ENCODE measurements at regions of chr13 and their contacts with region 1.

Region 1: GRCh38 chr13:52428295-52428694 is 22.1 kb downstream of the VPS36 start:
- DNase-seq: no peak
- H3K4me3 ChIP-seq: no peak overlapping the region
- H3K27me3 ChIP-seq: no peaks in the 10 kb centered on the region
- CTCF ChIP-seq: no peak

Region 2: DNA sequence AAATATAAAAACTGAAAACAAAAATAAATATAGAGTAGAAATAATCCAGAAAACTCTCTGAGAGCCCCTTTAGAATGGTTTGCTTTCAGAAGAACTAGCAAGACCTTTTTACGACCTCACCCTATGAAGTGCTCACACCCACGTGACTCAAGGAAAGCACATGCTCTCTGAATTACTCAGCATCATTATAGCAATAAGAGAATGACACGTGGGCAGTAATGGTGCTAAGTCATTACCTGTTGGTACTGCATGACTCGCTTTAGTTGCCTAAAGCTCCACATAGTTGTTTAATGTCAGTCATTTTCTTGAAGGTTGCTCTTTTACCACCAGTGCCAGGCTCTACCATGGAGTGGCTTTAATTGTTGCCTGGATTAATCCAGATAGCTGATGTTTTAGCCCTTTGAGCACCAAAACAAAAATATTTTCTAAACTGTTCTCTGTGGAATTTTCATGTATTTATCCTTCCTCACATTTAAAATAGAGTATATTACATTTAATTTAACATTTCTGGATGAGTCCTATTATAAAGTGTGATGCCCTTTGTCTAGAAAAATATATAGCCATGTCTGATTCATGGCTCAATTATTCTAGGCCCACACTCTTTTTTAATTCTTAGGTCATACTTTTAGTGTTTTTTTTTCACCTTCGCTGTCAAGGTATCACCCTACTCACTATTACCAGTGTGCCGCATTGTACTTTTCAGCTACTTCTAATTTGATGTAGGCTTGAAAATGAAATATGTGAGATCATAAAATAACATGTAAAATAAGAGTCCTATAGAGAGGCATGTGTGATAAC is 79.1 kb before region 1 on chr13:
- CTCF ChIA-PET with region 1: no interaction called
- POLR2A ChIA-PET with region 1: interaction called, 13 read pairs
- DNase-seq: peak; percentile 55
- H3K4me3 ChIP-seq: no peak overlapping the region
- H3K27me3 ChIP-seq: no peaks in the 10 kb centered on the region
- CTCF ChIP-seq: no peak

Region 3: DNA sequence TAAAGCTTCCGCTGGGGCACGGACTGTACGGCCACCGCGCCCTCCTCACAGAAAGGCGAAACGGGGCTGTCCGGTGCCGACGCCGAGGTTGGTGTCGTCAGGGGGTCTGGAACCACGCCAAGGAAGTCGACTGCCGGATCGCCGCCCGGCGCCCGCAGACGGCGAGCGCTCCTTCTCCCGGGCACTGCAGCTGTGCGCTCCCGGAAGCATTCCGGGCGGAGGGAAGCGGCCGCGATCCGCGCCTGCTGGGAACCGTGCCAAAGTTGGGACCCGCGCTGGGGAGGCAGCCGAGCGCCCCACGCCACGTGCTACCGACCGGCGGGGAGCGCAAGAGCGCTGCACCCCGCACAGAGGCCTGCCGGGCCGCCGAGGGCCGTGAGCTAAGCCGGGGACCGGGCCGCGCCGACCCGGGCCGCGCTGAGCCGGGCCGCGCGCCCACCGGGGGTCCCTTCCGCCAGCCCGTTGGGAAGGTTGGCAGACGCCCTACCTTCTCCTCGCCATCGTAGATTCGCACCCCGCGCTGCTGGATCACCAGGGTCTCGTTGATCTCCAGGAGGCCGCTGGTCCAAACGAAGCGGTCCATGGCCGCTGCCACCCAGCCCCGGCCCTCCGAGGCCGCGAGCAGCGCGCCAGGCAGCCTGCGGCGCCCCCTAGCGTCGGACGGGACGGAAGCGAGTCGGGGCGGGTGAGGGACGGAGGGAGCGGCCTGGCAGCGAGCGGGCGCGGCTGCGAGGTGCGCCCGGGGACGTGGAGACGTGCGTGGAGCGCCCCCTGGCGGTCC is 21.9 kb after region 1 on chr13 and contains the start of gene VPS36:
- CTCF ChIA-PET with region 1: interaction called, 15 read pairs
- POLR2A ChIA-PET with region 1: no interaction called
- DNase-seq: peak; percentile 46
- H3K4me3 ChIP-seq: peak within 1 kb of the TSS; percentile 67
- H3K27me3 ChIP-seq: no peaks in the 10 kb centered on the region
- CTCF ChIP-seq: peak; percentile 80
- polyA plus RNA-seq, gene VPS36: 10.0 and 19.7 TPM in 2 replicates

Measured in BJ (cell line).